ENCODE measurements at regions of chr11 and their contacts with region 1.

Region 1: GRCh38 chr11:114059278-114059983 is at the start of gene ZBTB16:
- DNase-seq: peak; percentile 72
- ATAC-seq: peak; percentile 59
- H3K4me3 ChIP-seq: peak within 1 kb of the TSS; percentile 54 to 84 (median 67)
- H3K4me3 Mint-ChIP-seq: peak within 1 kb of the TSS; percentile 90
- H3K27ac ChIP-seq: no peak within 1 kb of the TSS
- H3K27ac Mint-ChIP-seq: peak within 1 kb of the TSS; percentile 62
- H3K4me1 ChIP-seq: peaks cover 9 to 20% of the 10 kb centered on the region in 2 donors
- H3K4me1 Mint-ChIP-seq: peaks cover 18% of the 10 kb centered on the region
- H3K27me3 ChIP-seq: peaks cover 0 to 40% (median 18%) of the 10 kb centered on the region in 4 experiments
- H3K27me3 Mint-ChIP-seq: peaks cover 53% of the 10 kb centered on the region
- CTCF ChIP-seq: no peak
- total RNA-seq, gene ZBTB16: 17.8 and 20.6 TPM in 2 replicates

Region 2: DNA sequence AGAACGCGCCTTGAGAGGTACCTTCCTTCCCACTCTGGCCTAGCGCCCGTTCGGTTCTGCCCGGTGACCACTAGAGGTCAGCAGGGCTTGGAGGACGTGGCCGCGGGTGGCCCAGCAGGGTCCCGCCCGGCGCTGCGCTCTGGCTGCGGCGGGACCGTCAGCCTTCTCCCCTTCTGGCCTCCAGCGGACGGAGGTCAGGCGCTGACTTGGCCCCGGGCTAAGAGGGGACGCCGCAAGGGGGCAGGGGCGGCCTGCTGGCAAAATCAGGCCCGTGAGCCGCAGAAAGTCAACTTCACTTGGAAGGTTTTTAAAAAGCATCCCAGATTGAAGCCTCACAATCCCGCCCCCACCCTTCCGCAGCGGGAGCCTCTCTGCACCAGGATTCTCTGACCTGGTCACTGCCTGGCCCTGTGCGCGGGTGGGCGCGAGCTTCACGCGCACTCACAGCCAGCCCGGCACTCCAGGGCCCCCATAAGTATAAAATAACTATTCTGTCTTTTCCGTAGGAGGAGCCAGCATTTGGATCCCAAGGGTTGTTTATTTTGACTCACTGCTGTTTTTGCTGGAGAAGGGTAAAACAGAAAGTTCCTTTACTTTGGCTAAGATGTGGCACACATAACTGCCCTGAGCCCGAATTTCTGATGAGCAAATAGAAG is 23.1 kb before region 1 on chr11:
- CTCF ChIA-PET with region 1: interaction called, 6 read pairs
- POLR2A ChIA-PET with region 1: no interaction called
- intact Hi-C with region 1: loop called (anchors 2 kb)
- DNase-seq: peak; percentile 72
- ATAC-seq: peak; percentile 93
- H3K4me3 ChIP-seq: peak overlapping the region in 3 of 5 experiments; percentile 18 to 48 (median 22)
- H3K4me3 Mint-ChIP-seq: no peak overlapping the region
- H3K27ac ChIP-seq: no peak overlapping the region
- H3K27ac Mint-ChIP-seq: no peak overlapping the region
- H3K4me1 ChIP-seq: peaks cover 0 to 12% of the 10 kb centered on the region in 2 donors
- H3K4me1 Mint-ChIP-seq: peaks cover 7% of the 10 kb centered on the region
- H3K27me3 ChIP-seq: peaks cover 0 to 17% (median 4%) of the 10 kb centered on the region in 4 experiments
- H3K27me3 Mint-ChIP-seq: peaks cover 28% of the 10 kb centered on the region
- CTCF ChIP-seq: peak; percentile 69

Region 3: DNA sequence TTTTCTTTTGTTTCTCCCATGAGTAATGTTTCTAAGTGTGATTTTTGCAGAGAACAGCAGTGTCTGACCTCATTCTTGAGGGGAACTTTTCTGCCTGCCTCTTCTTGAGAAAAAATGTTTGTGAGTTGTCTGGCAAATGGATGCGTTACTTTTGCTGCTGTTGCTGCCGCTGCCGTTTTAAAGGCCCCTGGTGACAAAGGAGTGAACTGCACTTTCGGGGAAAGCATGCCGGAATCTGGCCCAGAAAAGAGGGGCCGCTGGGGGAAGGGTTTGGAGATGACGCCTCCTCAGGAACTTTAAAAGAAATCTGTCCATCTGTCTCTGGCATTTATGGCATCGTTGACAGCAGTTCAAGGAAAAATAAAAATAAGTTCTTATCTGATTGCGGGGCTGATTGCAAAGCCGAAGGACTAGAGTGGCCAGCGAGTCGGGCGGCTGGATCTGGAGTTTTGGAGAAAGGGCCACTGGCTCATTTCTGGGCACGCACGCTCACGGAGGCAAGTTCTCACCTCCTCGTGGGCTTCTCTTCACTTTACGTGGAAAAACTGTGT is 16.5 kb after region 1 on chr11:
- CTCF ChIA-PET with region 1: no interaction called
- POLR2A ChIA-PET with region 1: interaction called, 4 read pairs
- intact Hi-C with region 1: loop called (anchors 2 kb)
- DNase-seq: peak; percentile 54
- ATAC-seq: peak; percentile 38
- H3K4me3 ChIP-seq: no peak overlapping the region
- H3K4me3 Mint-ChIP-seq: no peak overlapping the region
- H3K27ac ChIP-seq: no peak overlapping the region
- H3K27ac Mint-ChIP-seq: no peak overlapping the region
- H3K4me1 ChIP-seq: peaks cover 23 to 30% of the 10 kb centered on the region in 2 donors
- H3K4me1 Mint-ChIP-seq: peaks cover 38% of the 10 kb centered on the region
- H3K27me3 ChIP-seq: peaks cover 0 to 11% (median 0%) of the 10 kb centered on the region in 4 experiments
- H3K27me3 Mint-ChIP-seq: peaks cover 58% of the 10 kb centered on the region
- CTCF ChIP-seq: peak; percentile 63

Region 4: DNA sequence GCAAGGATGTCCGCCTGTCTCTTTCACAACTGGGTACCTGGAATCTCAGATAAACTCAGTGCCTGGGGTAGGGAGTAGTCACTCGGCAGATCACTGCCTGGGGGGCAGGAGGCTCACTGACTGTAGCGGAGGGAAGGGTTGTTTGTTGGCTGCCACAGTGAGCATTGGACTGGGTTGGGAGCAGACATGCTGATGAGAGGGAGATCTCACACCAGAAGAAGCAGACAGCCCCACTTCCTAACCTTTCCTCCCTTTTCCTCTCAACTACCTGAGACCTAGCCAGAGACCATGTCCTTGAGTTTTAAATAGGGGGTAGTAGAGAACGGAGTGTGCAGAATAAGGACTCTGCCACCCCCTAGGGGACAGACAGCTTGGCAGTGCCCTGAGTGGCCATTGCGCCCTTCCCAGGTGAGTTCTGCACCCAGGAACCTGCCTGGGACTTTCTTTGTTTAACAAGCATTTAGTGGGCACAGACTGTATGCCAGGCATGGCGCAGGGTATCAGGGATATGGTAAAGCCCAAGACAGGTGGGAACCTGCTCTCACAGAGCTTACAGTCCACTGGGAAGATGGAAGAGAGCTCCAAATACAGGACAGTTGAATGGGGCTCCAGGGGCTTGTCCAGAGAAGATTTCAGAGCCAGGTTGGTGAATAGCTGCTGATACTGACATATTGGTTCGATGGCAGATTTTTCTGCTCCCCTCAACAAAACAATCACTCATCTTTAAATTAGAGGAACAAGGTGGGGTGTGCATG is 121.0 kb after region 1 on chr11:
- CTCF ChIA-PET with region 1: interaction called, 14 read pairs
- POLR2A ChIA-PET with region 1: no interaction called
- intact Hi-C with region 1: no loop called
- DNase-seq: peak; percentile 59
- ATAC-seq: peak; percentile 59
- H3K4me3 ChIP-seq: no peak overlapping the region
- H3K4me3 Mint-ChIP-seq: peak overlapping the region; percentile 53
- H3K27ac ChIP-seq: peak overlapping the region; percentile 79 to 84
- H3K27ac Mint-ChIP-seq: peak overlapping the region; percentile 62
- H3K4me1 ChIP-seq: peaks cover 62 to 72% of the 10 kb centered on the region in 2 donors
- H3K4me1 Mint-ChIP-seq: peaks cover 69% of the 10 kb centered on the region
- H3K27me3 ChIP-seq: no peaks in the 10 kb centered on the region
- H3K27me3 Mint-ChIP-seq: peaks cover 2% of the 10 kb centered on the region
- CTCF ChIP-seq: peak; percentile 31

Region 5: DNA sequence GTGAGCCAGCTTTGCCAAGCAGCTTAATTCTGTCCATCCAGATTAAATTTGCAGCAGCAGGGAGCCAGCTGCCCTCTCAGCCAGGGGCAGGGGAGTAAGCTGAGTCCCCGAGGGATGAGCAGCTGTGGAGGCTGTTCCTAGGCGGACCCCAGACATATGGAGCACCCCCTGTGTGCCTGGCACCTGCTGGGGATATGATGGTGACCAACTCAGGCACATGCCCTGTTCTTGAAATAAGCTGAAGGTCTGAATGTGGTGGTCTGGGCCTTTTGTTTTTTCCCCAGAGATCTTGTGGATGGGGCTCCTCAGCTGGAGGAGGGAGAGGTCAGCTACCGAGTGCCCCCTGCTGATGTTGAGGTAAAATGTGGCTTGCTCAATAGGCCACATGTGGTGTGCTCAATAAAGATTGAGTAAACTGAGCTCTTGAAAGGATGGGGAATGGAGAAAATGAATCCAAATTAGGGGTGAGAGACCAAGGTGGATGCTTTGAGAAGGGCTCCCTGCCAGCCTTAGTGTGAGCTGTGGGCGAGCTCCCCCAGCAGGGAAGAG is 133.5 kb after region 1 on chr11:
- CTCF ChIA-PET with region 1: interaction called, 5 read pairs
- POLR2A ChIA-PET with region 1: no interaction called
- intact Hi-C with region 1: loop called (anchors 5 kb)
- DNase-seq: no peak
- ATAC-seq: no peak
- H3K4me3 ChIP-seq: no peak overlapping the region
- H3K4me3 Mint-ChIP-seq: no peak overlapping the region
- H3K27ac ChIP-seq: no peak overlapping the region
- H3K27ac Mint-ChIP-seq: no peak overlapping the region
- H3K4me1 ChIP-seq: peaks cover 42 to 66% of the 10 kb centered on the region in 2 donors
- H3K4me1 Mint-ChIP-seq: peaks cover 60% of the 10 kb centered on the region
- H3K27me3 ChIP-seq: no peaks in the 10 kb centered on the region
- H3K27me3 Mint-ChIP-seq: no peaks in the 10 kb centered on the region
- CTCF ChIP-seq: no peak

Region 6: DNA sequence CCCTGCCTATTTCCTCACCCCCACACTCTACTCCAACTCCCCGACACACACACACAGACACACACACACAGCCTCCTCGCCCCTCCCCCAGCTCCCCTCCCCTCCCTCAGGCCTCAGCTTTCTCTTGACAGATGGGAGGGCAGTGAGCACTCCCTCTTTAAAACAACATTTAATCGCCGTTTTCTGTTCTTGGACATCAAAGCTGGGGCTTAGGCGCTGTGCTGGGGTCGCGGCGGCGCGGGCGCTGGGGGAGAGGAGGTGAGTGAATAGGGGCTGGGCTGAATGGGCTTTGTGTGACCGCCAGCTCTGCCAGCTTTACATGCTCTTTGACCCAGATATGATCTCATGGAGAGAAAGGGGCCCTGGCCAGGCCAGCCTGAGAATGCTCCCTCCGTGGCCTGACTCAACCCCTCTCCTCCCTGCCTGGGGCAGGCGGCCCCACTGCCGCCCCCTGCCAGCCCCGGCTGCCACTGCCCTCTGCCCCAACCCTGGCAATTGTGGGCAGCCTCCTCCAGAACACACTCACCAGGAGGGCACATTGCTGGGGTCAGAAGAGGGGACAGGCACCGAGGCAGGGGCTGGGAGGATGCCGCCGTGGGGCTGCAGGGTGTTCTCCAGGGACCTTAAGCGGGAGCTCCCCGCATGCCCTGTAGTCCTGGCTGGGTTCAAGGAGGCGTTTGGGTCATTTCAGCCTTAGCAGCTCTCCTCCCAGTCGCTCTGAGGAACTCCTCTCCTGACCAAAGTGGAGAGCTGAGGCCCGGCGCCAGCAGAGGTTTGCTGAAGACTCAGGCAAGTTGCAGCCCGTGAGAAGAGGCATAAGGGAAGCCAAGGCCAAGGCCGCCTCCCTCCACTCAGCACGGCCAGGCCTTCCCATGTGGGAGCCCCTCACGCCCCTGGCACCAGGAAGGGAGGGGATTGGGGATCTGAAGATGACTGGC is 198.5 kb after region 1 on chr11:
- CTCF ChIA-PET with region 1: interaction called, 49 read pairs
- POLR2A ChIA-PET with region 1: interaction called, 3 read pairs
- intact Hi-C with region 1: loop called (anchors 2 kb)
- DNase-seq: no peak
- ATAC-seq: no peak
- H3K4me3 ChIP-seq: no peak overlapping the region
- H3K4me3 Mint-ChIP-seq: no peak overlapping the region
- H3K27ac ChIP-seq: peak overlapping the region; percentile 84 to 89
- H3K27ac Mint-ChIP-seq: peak overlapping the region; percentile 88
- H3K4me1 ChIP-seq: peaks cover 30 to 34% of the 10 kb centered on the region in 2 donors
- H3K4me1 Mint-ChIP-seq: peaks cover 32% of the 10 kb centered on the region
- H3K27me3 ChIP-seq: peaks cover 0 to 1% (median 0%) of the 10 kb centered on the region in 4 experiments
- H3K27me3 Mint-ChIP-seq: no peaks in the 10 kb centered on the region
- CTCF ChIP-seq: no peak

Region 7: DNA sequence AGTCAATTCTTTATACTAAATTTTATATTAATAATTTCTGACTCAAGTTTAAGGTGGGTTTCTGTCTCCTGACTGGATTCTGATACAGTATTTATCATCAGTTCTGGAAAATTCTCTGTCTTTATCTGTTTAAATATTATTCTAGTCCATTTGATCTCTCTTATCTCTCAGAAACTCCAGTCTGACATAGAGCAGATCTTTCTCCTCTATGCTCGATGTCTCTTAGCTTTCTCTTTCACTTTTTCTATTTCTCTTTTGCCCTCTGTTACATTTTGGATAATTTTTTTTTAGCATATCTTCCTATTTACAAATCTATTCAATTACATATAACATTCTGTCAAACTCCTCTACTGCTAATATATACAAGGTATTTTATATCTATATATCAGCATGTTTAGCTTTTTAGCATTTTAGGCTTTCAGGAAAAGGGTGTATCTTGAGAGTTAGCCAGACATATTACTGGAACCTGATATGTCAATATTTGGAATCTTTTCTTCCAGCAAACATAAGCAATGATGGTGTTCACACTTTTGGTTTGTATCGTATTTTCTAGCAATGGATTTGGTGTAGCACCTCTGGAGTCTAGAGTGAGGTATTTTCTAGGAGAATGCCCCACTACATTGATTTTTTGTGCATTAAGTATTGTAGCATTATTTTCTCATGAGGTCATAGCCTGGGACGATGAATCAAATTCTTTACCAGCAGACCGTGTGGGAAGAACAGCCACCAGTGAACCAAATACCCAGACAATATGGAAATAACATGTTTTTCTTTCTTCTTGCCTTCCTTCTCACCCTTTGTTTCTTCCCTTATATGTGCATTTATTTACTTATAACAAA is 232.6 kb after region 1 on chr11:
- CTCF ChIA-PET with region 1: no interaction called
- POLR2A ChIA-PET with region 1: no interaction called
- intact Hi-C with region 1: no loop called
- DNase-seq: no peak
- ATAC-seq: no peak
- H3K4me3 ChIP-seq: no peak overlapping the region
- H3K4me3 Mint-ChIP-seq: no peak overlapping the region
- H3K27ac ChIP-seq: no peak overlapping the region
- H3K27ac Mint-ChIP-seq: no peak overlapping the region
- H3K4me1 ChIP-seq: no peaks in the 10 kb centered on the region
- H3K4me1 Mint-ChIP-seq: no peaks in the 10 kb centered on the region
- H3K27me3 ChIP-seq: no peaks in the 10 kb centered on the region
- H3K27me3 Mint-ChIP-seq: peaks cover 34% of the 10 kb centered on the region
- CTCF ChIP-seq: no peak

Measured in B cell (primary cell).